ENCODE measurements at regions of chr4 and their contacts with region 1.

Region 1: DNA sequence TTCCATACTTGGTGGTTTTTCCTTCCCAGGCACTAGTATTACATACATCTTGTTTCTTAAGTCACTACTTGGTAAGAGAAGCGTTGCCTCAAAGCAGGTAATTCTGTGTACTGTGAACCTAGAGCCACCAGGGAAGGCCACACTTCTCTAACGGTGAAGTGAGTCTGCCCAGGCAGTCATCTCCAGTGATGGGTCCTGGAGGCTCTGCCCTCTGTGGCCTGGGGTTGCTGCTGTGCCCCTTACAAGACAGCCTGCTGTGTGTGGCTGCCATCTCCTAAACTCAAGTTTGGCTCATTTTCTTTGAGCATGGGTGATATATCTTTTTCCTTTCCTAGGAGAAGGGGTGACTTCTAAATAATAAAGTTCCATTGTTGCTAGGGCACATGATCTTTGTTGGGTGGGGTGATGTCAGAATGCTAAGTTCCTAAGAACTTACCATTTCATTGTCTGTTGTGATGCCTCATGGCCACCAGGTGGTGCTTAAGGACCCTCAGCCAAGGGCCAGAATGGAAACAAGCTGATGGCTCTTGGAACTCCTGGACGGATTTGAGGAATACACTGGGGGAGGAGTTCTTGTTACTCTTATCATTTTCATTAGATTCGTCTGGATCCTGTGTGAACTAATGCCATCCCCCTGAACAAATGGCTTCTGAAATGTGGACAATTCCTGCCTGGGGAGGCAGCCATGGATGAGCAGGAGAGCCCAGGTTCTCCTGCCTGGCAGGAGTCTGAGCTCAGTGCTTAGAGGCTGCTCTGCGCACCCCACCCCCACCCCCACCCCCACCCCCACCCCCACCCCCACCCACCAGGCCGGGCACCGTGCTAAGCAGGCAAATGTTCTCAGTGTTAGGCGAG is 41.1 kb upstream of the WDR1 start:
- DNase-seq: peak; percentile 76
- CTCF ChIP-seq: peak; percentile 75

Region 2: DNA sequence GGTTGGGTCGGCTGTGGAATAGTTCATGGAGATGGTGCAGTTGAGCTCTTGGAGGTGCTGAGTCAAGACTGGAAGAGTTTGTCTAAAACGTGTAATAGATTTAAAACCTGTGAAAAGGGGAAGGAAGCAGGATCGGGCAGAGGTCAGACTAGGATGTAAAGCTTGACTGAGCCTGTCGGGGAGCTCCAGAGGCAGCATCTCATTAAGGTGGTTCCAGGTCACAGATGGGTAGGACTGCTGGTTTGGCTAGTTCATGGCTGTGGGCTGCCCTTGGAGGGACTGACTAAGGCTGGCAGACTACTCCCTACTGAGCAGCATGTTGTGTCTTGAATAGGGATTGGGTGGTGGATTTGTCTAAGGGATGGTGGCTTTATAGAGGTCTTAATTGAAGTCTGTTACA is 12.7 kb before region 1 on chr4:
- CTCF ChIA-PET with region 1: interaction called, 21 read pairs
- POLR2A ChIA-PET with region 1: no interaction called
- DNase-seq: no peak
- CTCF ChIP-seq: no peak

Region 3: GRCh38 chr4:10403633-10404445 is 246.1 kb after region 1 on chr4:
- CTCF ChIA-PET with region 1: interaction called, 23 read pairs
- POLR2A ChIA-PET with region 1: no interaction called
- DNase-seq: peak; percentile 18
- CTCF ChIP-seq: peak; percentile 32